ENCODE measurements at regions of chr2 and their contacts with region 1.

Region 1: DNA sequence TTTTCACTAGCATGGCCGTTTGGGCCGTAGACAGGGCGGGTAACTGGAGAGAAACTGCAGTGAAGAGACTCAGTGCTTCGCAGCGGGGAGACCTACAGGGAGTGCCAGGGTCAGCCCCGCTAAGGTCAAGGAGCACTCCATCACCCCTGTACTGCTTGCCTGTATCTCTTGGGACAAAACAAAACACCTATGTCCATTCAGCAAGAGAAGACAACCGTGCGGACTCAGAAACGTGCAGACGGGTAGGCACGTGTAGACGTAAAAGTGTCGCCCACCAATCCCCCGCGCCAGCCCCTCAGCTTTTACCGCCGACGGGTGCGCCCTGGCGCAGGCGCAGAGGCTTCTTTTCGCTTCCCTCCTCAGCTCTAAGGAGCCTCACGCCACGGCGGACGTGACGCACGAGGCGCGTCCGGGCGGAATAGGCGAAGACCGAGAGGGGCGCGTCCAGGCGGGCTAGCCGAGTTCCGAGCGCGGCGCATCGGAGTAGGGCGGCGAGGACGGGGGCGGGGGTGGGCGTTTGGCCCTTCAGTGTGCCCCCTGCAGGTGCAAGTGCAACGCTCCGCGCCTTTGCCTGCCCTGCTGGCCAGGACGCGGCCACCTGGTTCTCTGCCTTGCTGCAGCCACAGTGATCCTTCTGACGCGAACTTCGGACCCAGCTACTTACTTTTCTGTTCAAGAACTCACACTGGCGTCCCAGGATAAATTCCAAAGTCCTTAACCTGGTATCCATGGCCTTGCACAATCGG is 3.3 kb upstream of the SOS1 start:
- DNase-seq: peak; percentile 98
- ATAC-seq: peak; percentile 72
- H3K4me3 Mint-ChIP-seq: peak overlapping the region; percentile 85
- H3K27ac Mint-ChIP-seq: peak overlapping the region; percentile 94
- H3K4me1 Mint-ChIP-seq: peaks cover 68% of the 10 kb centered on the region
- H3K27me3 Mint-ChIP-seq: no peaks in the 10 kb centered on the region

Region 2: GRCh38 chr2:39059366-39059952 is 64.7 kb before region 1 on chr2:
- CTCF ChIA-PET with region 1: interaction called, 15 read pairs
- POLR2A ChIA-PET with region 1: interaction called, 3 read pairs
- DNase-seq: no peak
- ATAC-seq: no peak
- H3K4me3 Mint-ChIP-seq: no peak overlapping the region
- H3K27ac Mint-ChIP-seq: peak overlapping the region; percentile 72
- H3K4me1 Mint-ChIP-seq: peaks cover 31% of the 10 kb centered on the region
- H3K27me3 Mint-ChIP-seq: no peaks in the 10 kb centered on the region

Region 3: GRCh38 chr2:39135690-39136259 is 11.6 kb after region 1 on chr2:
- CTCF ChIA-PET with region 1: interaction called, 10 read pairs
- POLR2A ChIA-PET with region 1: interaction called, 46 read pairs
- DNase-seq: peak; percentile 38
- ATAC-seq: peak; percentile 49
- H3K4me3 Mint-ChIP-seq: peak overlapping the region; percentile 49
- H3K27ac Mint-ChIP-seq: peak overlapping the region; percentile 93
- H3K4me1 Mint-ChIP-seq: peaks cover 80% of the 10 kb centered on the region
- H3K27me3 Mint-ChIP-seq: no peaks in the 10 kb centered on the region

Region 4: GRCh38 chr2:39202639-39203369 is 78.6 kb after region 1 on chr2:
- CTCF ChIA-PET with region 1: interaction called, 9 read pairs
- POLR2A ChIA-PET with region 1: interaction called, 14 read pairs
- DNase-seq: no peak
- ATAC-seq: peak; percentile 62
- H3K4me3 Mint-ChIP-seq: no peak overlapping the region
- H3K27ac Mint-ChIP-seq: peak overlapping the region; percentile 88
- H3K4me1 Mint-ChIP-seq: peaks cover 36% of the 10 kb centered on the region
- H3K27me3 Mint-ChIP-seq: no peaks in the 10 kb centered on the region

Region 5: GRCh38 chr2:39216346-39217191 is 92.4 kb after region 1 on chr2:
- CTCF ChIA-PET with region 1: interaction called, 27 read pairs
- POLR2A ChIA-PET with region 1: interaction called, 315 read pairs
- DNase-seq: peak; percentile 96
- ATAC-seq: peak; percentile 90
- H3K4me3 Mint-ChIP-seq: peak overlapping the region; percentile 57
- H3K27ac Mint-ChIP-seq: peak overlapping the region; percentile 97
- H3K4me1 Mint-ChIP-seq: peaks cover 76% of the 10 kb centered on the region
- H3K27me3 Mint-ChIP-seq: no peaks in the 10 kb centered on the region

Measured in activated CD8-positive, alpha-beta T cell treated with anti-CD3 and anti-CD28 coated beads, Interleukin-2, amount 10 ng/mL, durations not matched to agents 7 days and 5 days (primary cell).